ENCODE measurements at regions of chr17 and their contacts with region 1.

Region 1: DNA sequence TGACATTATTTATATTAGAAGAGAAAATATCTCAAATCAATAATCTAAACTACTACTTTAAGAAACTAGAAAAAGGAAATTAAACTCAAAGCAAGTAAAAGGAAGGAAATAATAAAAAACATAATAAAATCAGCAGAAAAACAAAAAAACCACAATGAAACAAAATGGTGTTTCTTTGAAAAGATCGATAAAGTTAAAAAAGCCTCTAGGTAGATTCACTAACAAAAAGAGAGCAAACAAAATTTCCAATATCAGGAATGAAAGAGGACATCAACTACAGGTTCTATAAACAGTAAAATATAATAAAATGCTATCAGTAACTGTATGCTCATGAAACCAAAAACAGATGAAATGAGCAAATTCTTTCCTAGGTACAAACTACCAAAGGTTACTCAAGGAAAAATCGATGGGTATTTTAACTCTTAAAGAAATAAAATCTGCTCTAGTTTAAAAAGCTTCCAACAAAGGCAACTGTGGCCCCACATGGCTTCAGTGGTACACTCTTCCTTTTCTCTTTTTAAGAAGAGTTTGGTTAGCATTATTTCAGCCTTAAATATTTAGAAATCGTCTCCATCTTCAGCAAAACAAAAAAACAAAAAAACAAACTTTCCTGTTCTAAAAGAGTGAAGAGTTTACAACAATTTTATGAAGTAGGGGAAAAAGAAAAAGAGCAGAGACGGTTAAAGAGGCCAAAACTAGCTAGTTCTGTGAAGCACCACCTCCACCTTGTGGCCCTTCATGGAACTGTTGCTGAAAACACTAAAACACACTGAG is 102.2 kb downstream of the TRIM37 start:
- DNase-seq: peak; percentile 56 to 86
- ATAC-seq: peak; percentile 71 to 85 (median 78)
- H3K4me3 ChIP-seq: no peak overlapping the region
- H3K4me3 Mint-ChIP-seq: no peak overlapping the region
- H3K27ac ChIP-seq: no peak overlapping the region
- H3K27ac Mint-ChIP-seq: no peak overlapping the region
- H3K4me1 ChIP-seq: peaks cover 6% of the 10 kb centered on the region
- H3K4me1 Mint-ChIP-seq: no peaks in the 10 kb centered on the region
- H3K27me3 ChIP-seq: no peaks in the 10 kb centered on the region
- H3K27me3 Mint-ChIP-seq: no peaks in the 10 kb centered on the region
- CTCF ChIP-seq: peak; percentile 96

Region 2: DNA sequence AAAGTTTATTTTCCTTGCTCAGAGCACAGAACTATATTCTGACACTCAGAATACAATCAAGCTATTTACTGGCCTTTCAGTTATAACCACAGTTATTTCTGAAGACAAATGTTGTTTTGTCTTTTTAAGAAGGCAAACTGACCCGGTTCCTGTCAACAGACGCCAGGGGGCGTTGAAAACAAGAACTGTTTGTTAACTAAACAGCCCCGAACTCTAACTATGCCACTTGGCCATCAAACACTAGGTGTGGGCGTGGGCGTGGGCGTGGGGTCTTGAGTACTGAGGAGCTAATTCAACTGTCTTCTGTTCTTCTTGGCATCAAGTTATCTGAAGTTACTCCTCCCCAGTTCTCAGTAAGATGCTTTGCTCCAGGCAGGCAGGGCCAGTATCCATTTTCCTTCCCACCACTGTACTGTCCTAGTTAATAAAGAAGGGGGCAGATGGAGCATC is 426.9 kb before region 1 on chr17:
- intact Hi-C with region 1: loop called (anchors 2 kb)
- DNase-seq: peak; percentile 20 to 72
- ATAC-seq: peak in 1 of 3 donors; percentile 59
- H3K4me3 ChIP-seq: no peak overlapping the region
- H3K4me3 Mint-ChIP-seq: no peak overlapping the region
- H3K27ac ChIP-seq: no peak overlapping the region
- H3K27ac Mint-ChIP-seq: no peak overlapping the region
- H3K4me1 ChIP-seq: no peaks in the 10 kb centered on the region
- H3K4me1 Mint-ChIP-seq: no peaks in the 10 kb centered on the region
- H3K27me3 ChIP-seq: no peaks in the 10 kb centered on the region
- H3K27me3 Mint-ChIP-seq: peaks cover 0 to 4% of the 10 kb centered on the region in 2 donors
- CTCF ChIP-seq: peak; percentile 61

Region 3: DNA sequence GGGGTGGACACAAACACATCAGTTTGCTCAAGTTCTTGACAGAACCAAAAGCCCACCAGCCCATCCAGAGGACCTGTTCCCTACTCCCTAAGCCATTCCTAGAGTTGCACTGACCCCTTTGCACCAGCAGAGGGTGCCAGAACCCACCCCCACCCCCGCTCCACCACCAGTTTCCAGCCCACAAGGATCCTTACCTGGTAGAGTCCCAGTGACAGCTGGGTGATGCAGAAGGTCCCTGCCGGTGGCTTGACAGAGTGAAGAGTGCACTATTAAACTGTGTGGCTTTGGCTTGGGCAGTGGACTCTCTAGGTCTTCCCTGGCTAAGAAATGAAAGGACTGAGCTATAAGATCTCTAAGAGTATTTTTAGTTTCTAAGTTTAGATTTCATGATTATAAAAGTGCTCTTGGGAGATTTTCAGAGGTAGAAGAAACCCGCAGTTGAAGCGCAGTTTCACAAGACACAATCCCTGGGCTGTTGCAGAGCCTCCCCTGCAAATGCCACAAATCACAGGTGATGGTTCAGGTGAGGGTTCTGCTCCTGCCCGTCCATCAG is 416.7 kb before region 1 on chr17:
- intact Hi-C with region 1: loop called (anchors 1 kb)
- DNase-seq: peak; percentile 29 to 82
- ATAC-seq: peak; percentile 68 to 80 (median 75)
- H3K4me3 ChIP-seq: no peak overlapping the region
- H3K4me3 Mint-ChIP-seq: no peak overlapping the region
- H3K27ac ChIP-seq: no peak overlapping the region
- H3K27ac Mint-ChIP-seq: no peak overlapping the region
- H3K4me1 ChIP-seq: peaks cover 5% of the 10 kb centered on the region
- H3K4me1 Mint-ChIP-seq: peaks cover 0 to 4% of the 10 kb centered on the region in 2 donors
- H3K27me3 ChIP-seq: no peaks in the 10 kb centered on the region
- H3K27me3 Mint-ChIP-seq: peaks cover 6 to 7% of the 10 kb centered on the region in 2 donors
- CTCF ChIP-seq: peak; percentile 94

Region 4: DNA sequence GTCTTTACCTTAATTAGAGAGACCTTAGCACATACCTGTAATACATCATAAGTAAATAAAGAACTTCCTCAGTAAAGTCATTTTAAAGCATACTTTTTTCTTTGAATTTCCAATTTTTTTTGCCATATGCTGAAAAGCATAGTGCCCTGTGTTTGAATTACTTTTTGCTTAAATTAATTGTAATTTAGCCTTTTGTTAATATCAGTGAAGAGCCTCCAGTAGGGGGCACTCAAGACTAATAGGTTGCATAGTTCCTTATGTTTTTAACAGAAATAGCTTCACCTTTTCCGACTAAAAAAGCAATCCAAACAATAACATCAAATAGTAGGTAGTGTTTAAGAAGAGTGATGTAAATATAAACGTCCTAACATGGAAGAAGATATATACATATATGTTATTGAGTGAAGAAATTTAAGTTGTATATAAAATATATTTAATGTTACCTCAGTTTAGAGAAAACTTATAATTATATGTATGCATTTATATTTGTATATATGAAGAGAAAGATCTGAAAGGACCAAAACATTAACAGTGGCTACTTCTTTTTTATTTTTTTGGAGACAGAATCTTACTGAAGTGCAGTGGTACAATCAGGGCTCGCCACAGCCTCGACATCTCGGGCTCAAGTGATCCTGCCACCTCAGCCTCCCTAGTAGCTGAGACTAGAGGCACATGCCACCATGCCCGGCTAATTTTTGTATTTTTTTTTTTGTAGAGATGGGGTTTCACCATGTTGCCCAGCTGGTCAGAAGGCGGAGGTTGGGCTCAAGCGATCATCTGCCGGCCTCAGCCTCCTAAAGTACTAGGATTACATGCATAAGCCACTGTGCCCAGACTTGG is 293.4 kb before region 1 on chr17:
- intact Hi-C with region 1: loop called (anchors 1 kb)
- DNase-seq: peak in 1 of 2 donors; percentile 73
- ATAC-seq: no peak
- H3K4me3 ChIP-seq: no peak overlapping the region
- H3K4me3 Mint-ChIP-seq: no peak overlapping the region
- H3K27ac ChIP-seq: no peak overlapping the region
- H3K27ac Mint-ChIP-seq: peak overlapping the region in 1 of 2 donors; percentile 14
- H3K4me1 ChIP-seq: no peaks in the 10 kb centered on the region
- H3K4me1 Mint-ChIP-seq: peaks cover 5 to 7% of the 10 kb centered on the region in 2 donors
- H3K27me3 ChIP-seq: no peaks in the 10 kb centered on the region
- H3K27me3 Mint-ChIP-seq: no peaks in the 10 kb centered on the region
- CTCF ChIP-seq: peak; percentile 85

Region 5: DNA sequence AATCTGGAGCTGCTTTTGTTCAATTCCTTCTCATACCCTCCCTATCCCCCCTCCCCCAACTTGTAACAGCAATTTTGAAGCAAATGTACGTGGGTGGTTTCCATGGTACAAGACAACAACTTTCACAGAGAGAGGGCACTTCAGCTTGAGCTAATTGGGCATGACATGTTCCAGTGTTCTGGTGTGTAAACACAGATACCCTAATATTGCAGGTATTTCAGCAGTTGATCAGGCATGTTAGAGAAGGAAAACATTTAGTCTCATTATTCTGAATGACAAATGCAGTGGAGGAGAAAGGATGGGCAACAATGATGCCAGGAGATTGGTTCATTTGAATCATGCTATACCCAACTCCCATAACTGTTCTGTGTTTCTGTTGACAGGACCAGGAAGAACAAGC is 35.4 kb before region 1 on chr17:
- intact Hi-C with region 1: no loop called
- DNase-seq: peak in 1 of 2 donors; percentile 7
- ATAC-seq: no peak
- H3K4me3 ChIP-seq: no peak overlapping the region
- H3K4me3 Mint-ChIP-seq: no peak overlapping the region
- H3K27ac ChIP-seq: no peak overlapping the region
- H3K27ac Mint-ChIP-seq: no peak overlapping the region
- H3K4me1 ChIP-seq: no peaks in the 10 kb centered on the region
- H3K4me1 Mint-ChIP-seq: peaks cover 4 to 13% of the 10 kb centered on the region in 2 donors
- H3K27me3 ChIP-seq: peaks cover 9% of the 10 kb centered on the region
- H3K27me3 Mint-ChIP-seq: peaks cover 11 to 12% of the 10 kb centered on the region in 2 donors
- CTCF ChIP-seq: no peak

Measured in natural killer cell (primary cell).